ENCODE measurements at regions of chr1 and their contacts with region 1.

Region 1: DNA sequence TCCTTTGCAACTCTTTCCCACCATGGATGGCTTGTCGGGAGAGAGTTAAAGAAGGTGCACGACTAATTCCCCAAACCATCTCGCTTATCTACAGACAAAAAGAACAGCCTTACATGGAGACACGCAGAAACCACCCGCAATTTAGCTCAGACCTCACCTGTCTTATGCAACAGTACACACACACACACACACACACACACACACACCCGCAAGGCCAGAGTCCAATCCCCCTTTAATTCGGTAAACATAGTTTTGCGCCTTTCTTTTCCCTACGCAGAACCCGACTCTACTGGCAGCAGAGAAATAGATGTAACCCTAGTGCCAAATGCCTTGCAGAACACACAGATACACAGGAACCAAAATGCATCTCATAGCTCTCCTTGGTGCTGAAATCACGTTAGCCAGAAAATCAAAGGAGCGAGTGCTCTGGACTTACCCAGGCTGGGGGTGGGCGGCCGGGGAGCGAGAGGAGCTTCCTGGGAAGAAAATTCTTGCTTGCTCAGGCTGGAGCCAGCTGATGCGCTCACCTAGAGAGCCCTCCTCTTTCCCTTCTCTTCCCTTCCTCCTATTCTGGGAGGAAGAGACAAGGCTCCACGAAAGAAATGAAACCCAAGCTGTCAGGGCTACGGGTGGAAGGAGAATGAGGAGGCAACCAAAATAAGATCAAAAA is 470 bp downstream of the TNR start:
- DNase-seq: no peak
- H3K4me3 Mint-ChIP-seq: no peak overlapping the region
- H3K27ac Mint-ChIP-seq: no peak overlapping the region
- H3K4me1 Mint-ChIP-seq: peaks cover 2% of the 10 kb centered on the region
- H3K27me3 Mint-ChIP-seq: peaks cover 4% of the 10 kb centered on the region

Region 2: GRCh38 chr1:175388285-175388684 is 354.6 kb before region 1 on chr1:
- intact Hi-C with region 1: no loop called
- DNase-seq: no peak
- H3K4me3 Mint-ChIP-seq: no peak overlapping the region
- H3K27ac Mint-ChIP-seq: no peak overlapping the region
- H3K4me1 Mint-ChIP-seq: no peaks in the 10 kb centered on the region
- H3K27me3 Mint-ChIP-seq: peaks cover 15% of the 10 kb centered on the region

Region 3: DNA sequence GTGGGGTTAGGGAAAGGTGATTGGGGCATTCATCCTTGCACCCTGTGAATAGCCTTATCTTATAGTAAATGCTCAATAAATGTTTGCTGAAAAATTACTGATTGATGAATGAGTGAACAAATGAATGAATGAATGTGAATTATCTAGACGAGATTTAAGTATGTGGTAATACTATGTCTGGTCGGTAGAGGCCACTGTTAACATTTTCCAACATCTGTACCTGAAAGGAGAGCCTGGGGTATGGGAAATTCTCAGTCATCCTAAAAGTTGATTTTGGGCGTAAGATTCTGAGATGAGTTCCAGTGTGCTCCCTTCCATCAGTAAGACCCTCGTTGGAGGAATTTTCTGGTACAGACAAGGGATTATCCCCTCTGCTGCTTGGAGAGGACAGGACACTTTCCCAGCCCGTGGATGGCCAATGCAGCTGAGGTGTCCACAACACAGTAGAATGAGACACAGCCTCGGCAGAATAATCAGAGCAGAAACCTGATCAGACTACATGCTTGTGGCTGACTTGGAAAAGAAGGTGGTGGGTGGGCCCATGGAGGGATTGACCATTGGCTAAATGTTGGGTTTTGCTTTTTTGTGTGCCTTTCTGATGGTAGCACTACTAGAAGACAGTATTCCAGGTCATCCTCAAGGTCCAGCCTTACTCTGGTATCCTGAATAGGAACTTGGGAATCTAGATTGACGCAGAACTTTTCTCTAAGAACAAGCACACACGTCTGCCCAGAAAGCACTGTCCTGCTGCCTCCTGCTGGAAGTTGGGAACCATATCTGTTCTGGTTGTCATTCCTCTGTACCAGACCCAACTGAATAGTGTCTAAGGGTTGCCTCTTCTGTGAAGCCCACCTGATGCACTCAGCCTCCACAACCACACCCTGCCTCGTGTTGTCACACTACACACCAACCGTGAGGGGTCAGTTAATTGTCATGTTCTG is 261.5 kb before region 1 on chr1:
- intact Hi-C with region 1: loop called (anchors 10 kb)
- DNase-seq: peak; percentile 60
- H3K4me3 Mint-ChIP-seq: no peak overlapping the region
- H3K27ac Mint-ChIP-seq: no peak overlapping the region
- H3K4me1 Mint-ChIP-seq: no peaks in the 10 kb centered on the region
- H3K27me3 Mint-ChIP-seq: peaks cover 15% of the 10 kb centered on the region

Region 4: DNA sequence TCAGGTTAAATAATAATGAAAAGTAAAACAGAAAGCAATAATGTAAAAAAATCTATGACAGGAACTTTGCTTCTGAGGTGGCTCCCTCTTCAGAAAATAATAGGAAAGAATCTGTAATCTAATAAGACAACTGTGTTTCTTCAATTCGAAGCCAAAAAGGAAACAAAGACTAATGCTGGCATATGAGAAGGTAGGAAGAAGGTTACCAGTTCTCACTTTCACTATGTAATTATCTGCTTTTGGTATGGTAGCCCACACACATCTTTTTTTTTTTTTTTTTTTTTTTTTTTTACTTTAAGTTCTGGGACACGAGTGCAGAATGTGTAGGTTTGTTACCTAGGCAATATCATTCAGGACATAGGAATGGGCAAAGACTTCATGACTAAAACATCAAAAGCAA is 417.1 kb after region 1 on chr1:
- intact Hi-C with region 1: no loop called
- DNase-seq: no peak
- H3K4me3 Mint-ChIP-seq: peak overlapping the region; percentile 17
- H3K27ac Mint-ChIP-seq: peak overlapping the region; percentile 85
- H3K4me1 Mint-ChIP-seq: peaks cover 26% of the 10 kb centered on the region
- H3K27me3 Mint-ChIP-seq: no peaks in the 10 kb centered on the region